ENCODE measurements at regions of chr1 and their contacts with region 1.

Region 1: GRCh38 chr1:88726697-88727096 is 42.6 kb downstream of the PKN2 start:
- DNase-seq: no peak
- ATAC-seq: no peak
- H3K4me3 Mint-ChIP-seq: no peak overlapping the region
- H3K27ac Mint-ChIP-seq: no peak overlapping the region
- H3K4me1 Mint-ChIP-seq: peaks cover 38% of the 10 kb centered on the region
- H3K27me3 Mint-ChIP-seq: no peaks in the 10 kb centered on the region
- CTCF ChIP-seq: no peak

Region 2: GRCh38 chr1:88741413-88741812 is 14.7 kb after region 1 on chr1:
- CTCF ChIA-PET with region 1: no interaction called
- POLR2A ChIA-PET with region 1: no interaction called
- intact Hi-C with region 1: loop called (anchors 2 kb)
- DNase-seq: no peak
- ATAC-seq: no peak
- H3K4me3 Mint-ChIP-seq: no peak overlapping the region
- H3K27ac Mint-ChIP-seq: no peak overlapping the region
- H3K4me1 Mint-ChIP-seq: peaks cover 9% of the 10 kb centered on the region
- H3K27me3 Mint-ChIP-seq: no peaks in the 10 kb centered on the region
- CTCF ChIP-seq: no peak